ENCODE measurements at regions of chr2 and their contacts with region 1.

Region 1: GRCh38 chr2:69724540-69725159 is 17.3 kb upstream of the ANXA4 start:
- DNase-seq: peak; percentile 86
- H3K4me3 ChIP-seq: no peak overlapping the region
- H3K27ac ChIP-seq: no peak overlapping the region
- H3K4me1 ChIP-seq: no peaks in the 10 kb centered on the region
- H3K27me3 ChIP-seq: no peaks in the 10 kb centered on the region
- CTCF ChIP-seq: peak; percentile 75 to 96 (median 96)
- POLR2A ChIP-seq: no peak

Region 2: DNA sequence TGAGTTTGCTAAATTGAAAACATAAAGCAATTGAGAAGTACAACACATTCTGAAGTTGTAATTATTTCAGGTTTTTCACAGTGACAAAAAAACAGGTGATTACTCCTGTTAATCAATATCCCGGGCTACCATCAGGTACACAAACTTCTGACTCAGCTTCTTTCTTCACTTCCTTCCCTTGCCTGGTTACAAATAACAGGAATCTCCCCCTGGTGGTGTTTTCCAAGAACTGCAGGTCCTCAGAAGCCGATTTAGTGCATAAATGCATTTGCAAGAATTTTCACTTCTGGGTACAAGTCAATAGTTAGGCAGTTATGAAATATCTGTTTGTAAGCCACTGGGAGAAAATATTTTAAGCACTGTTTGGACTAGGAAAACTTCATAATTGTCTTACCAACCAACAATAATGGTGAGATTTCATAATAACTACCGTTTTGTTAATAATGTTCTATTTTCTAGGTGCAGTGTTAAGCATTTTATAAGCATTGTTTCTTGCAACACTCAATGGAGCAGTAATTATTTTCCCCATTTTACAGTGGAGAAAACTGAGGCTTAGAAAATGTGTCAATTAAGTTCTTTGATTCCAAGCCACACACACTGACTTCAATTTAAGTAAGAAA is 92.4 kb after region 1 on chr2:
- intact Hi-C with region 1: loop called (anchors 1 kb)
- DNase-seq: peak; percentile 80
- H3K4me3 ChIP-seq: no peak overlapping the region
- H3K27ac ChIP-seq: no peak overlapping the region
- H3K4me1 ChIP-seq: no peaks in the 10 kb centered on the region
- H3K27me3 ChIP-seq: no peaks in the 10 kb centered on the region
- CTCF ChIP-seq: peak; percentile 86 to 96 (median 92)
- POLR2A ChIP-seq: no peak

Region 3: GRCh38 chr2:70070541-70071268 is 346.1 kb after region 1 on chr2:
- intact Hi-C with region 1: loop called (anchors 10 kb)
- DNase-seq: peak; percentile 78
- H3K4me3 ChIP-seq: no peak overlapping the region
- H3K27ac ChIP-seq: peak overlapping the region; percentile 74 to 81
- H3K4me1 ChIP-seq: no peaks in the 10 kb centered on the region
- H3K27me3 ChIP-seq: no peaks in the 10 kb centered on the region
- CTCF ChIP-seq: peak; percentile 70 to 93 (median 89)
- POLR2A ChIP-seq: no peak

Region 4: GRCh38 chr2:70142590-70143313 is 418.1 kb after region 1 on chr2:
- intact Hi-C with region 1: loop called (anchors 10 kb)
- DNase-seq: peak; percentile 99
- H3K4me3 ChIP-seq: peak overlapping the region; percentile 57 to 64
- H3K27ac ChIP-seq: peak overlapping the region; percentile 98 to 100
- H3K4me1 ChIP-seq: no peaks in the 10 kb centered on the region
- H3K27me3 ChIP-seq: no peaks in the 10 kb centered on the region
- CTCF ChIP-seq: peak; percentile 97 to 100 (median 98)
- POLR2A ChIP-seq: peak; percentile 93